ENCODE measurements at regions of chr3 and their contacts with region 1.

Region 1: GRCh38 chr3:105868742-105869530 is at the start of gene CBLB:
- DNase-seq: peak; percentile 95 to 98
- H3K4me3 ChIP-seq: peak within 1 kb of the TSS; percentile 69
- H3K27ac ChIP-seq: peak within 1 kb of the TSS; percentile 64
- H3K4me1 ChIP-seq: peaks cover 36% of the 10 kb centered on the region
- H3K27me3 ChIP-seq: no peaks in the 10 kb centered on the region
- CTCF ChIP-seq: no peak
- total RNA-seq, gene CBLB: 29.8 and 44.0 TPM in 2 replicates

Region 2: GRCh38 chr3:105598047-105598796 is 270.7 kb before region 1 on chr3:
- CTCF ChIA-PET with region 1: no interaction called
- POLR2A ChIA-PET with region 1: no interaction called
- intact Hi-C with region 1: loop called (anchors 1 kb)
- DNase-seq: peak; percentile 55 to 96
- H3K4me3 ChIP-seq: 0 out of 2 replicates have a peak overlapping the region, but pooled peaks have one; percentile 2
- H3K27ac ChIP-seq: peak overlapping the region; percentile 49
- H3K4me1 ChIP-seq: peaks cover 16% of the 10 kb centered on the region
- H3K27me3 ChIP-seq: no peaks in the 10 kb centered on the region
- CTCF ChIP-seq: no peak

Region 3: GRCh38 chr3:105899516-105899915 is 30.6 kb after region 1 on chr3:
- CTCF ChIA-PET with region 1: no interaction called
- POLR2A ChIA-PET with region 1: no interaction called
- intact Hi-C with region 1: no loop called
- DNase-seq: peak in 1 of 2 experiments; percentile 67
- H3K4me3 ChIP-seq: no peak overlapping the region
- H3K27ac ChIP-seq: peak overlapping the region; percentile 1; the same call in 1 of the 2 replicates
- H3K4me1 ChIP-seq: peaks cover 14% of the 10 kb centered on the region; the same call in 1 of the 2 replicates
- H3K27me3 ChIP-seq: no peaks in the 10 kb centered on the region
- CTCF ChIP-seq: no peak

Region 4: DNA sequence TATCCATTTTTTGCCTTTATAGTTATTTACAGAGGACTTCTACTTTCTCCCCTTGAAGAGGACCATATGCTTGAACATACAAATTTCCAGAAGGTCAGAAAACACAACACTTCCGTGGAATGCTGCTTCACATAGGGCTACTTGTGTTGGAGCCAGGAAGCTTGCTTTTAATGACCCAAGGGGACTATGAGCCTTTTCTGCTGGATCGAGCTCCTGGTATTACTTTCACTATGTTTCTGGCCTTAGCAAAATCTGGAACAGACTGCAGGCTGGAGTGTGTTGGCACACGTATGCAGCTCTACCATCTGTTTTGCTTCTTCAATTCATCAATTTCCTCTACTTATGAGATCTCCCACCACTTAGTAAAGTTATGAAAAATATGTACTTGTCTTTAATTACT is 69.2 kb after region 1 on chr3:
- CTCF ChIA-PET with region 1: no interaction called
- POLR2A ChIA-PET with region 1: no interaction called
- intact Hi-C with region 1: no loop called
- DNase-seq: no peak
- H3K4me3 ChIP-seq: no peak overlapping the region
- H3K27ac ChIP-seq: no peak overlapping the region
- H3K4me1 ChIP-seq: no peaks in the 10 kb centered on the region
- H3K27me3 ChIP-seq: no peaks in the 10 kb centered on the region
- CTCF ChIP-seq: no peak

Region 5: DNA sequence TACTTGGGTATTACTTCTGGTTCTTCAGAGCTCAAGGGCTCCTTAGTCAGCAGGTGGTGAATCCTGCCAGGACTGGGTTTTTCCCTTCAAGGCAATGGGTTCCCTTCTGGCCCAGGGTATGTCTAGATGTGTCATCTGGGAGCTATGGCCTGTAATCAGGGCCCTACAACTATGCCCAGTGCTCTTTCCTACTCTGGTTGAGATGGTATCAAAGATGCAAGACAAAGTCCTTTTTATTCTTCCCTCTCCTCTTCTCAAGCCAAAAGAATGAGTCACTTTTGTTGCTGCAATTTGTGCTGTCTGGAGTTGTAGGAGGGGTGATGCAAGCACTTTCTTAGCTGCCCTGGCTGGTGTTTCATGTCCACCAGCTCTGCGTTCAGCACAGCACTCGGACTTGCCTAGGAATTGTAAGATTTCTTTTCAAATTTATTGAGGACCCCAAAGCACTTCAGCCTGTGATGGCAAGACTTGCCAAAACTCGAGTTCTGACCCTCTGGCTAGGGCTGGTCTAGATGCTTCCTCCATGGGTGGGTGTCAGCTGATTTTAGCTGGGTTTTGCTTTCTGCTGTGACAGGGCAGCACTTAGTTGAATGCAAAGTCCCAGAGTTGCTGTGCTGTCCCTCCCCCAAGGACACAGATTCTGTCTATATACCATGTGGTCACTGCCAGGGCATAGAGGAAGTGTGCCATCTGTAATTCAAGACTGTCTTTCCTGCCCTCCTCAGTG is 129.0 kb after region 1 on chr3:
- CTCF ChIA-PET with region 1: no interaction called
- POLR2A ChIA-PET with region 1: no interaction called
- intact Hi-C with region 1: loop called (anchors 2 kb)
- DNase-seq: peak; percentile 61 to 95
- H3K4me3 ChIP-seq: peak overlapping the region; percentile 34; the same call in 1 of the 2 replicates
- H3K27ac ChIP-seq: peak overlapping the region; percentile 79
- H3K4me1 ChIP-seq: peaks cover 23% of the 10 kb centered on the region
- H3K27me3 ChIP-seq: no peaks in the 10 kb centered on the region
- CTCF ChIP-seq: no peak

Region 6: DNA sequence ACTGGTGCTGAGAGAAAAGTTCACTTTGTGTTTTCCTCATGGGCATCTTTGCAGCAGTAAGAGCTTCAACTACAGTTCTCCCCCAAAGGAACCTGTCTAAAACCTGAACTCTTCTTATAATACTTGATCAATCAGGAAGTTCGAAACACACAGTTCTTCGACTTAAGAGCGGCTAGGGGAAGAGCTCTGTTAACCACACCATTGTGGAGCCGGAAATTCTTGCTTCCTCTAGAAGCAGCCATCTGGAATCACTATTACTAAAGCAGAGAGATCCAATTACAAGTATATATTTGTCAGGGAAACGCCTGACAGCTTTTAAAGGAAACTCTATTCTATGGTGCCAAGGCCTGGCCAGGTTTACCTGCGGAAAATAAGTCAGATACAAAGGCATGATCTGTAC is 337.2 kb after region 1 on chr3:
- CTCF ChIA-PET with region 1: no interaction called
- POLR2A ChIA-PET with region 1: no interaction called
- intact Hi-C with region 1: loop called (anchors 5 kb)
- DNase-seq: no peak
- H3K4me3 ChIP-seq: no peak overlapping the region
- H3K27ac ChIP-seq: no peak overlapping the region
- H3K4me1 ChIP-seq: 0 out of 2 replicates have a peak, but pooled peaks cover 4% of the 10 kb centered on the region
- H3K27me3 ChIP-seq: no peaks in the 10 kb centered on the region
- CTCF ChIP-seq: no peak

Region 7: DNA sequence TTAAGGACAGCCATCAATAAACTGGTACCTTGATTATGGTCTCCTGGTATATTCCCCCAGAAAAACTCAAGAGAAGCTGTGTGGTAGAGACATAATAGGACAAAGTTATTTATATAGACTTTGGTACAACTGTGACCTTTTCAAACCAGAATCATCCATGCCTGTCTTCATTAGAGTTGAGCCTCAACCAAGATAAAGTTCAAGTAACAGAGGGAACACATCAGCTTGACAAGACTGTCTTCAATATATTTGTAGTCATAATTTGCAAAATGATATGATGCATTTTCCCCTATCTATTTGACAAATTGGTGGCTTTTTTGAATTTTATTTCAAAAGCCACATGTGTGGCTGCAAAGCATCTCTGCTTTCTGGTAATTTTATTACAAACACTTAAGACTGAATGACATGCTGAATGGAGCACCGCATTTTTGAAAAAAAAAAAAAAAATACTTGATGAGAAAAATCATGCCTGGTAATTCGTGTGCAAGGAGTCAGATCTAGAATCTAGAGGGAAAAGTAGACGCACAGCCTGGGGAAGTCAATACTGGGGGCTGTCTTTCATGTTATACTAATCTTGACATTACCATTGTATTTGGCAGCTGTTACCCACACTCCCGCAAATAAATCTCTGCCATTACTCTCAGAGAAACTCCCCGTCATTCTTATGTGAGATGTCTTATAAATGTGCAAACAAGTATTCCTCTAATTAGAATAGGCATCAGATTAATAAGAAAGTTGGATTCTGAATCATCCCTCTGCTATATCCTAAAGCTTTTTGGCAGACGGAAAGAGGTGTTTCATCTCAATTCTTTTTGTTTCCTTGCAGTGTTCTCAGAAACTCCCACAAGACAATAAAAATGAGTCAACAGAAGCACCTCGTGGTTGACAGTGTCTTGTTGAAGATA is 554.6 kb after region 1 on chr3:
- CTCF ChIA-PET with region 1: no interaction called
- POLR2A ChIA-PET with region 1: no interaction called
- intact Hi-C with region 1: no loop called
- DNase-seq: peak in 1 of 2 experiments; percentile 20
- H3K4me3 ChIP-seq: no peak overlapping the region
- H3K27ac ChIP-seq: no peak overlapping the region
- H3K4me1 ChIP-seq: no peaks in the 10 kb centered on the region; the same call in 1 of the 2 replicates
- H3K27me3 ChIP-seq: no peaks in the 10 kb centered on the region
- CTCF ChIP-seq: no peak

Region 8: GRCh38 chr3:106609666-106610301 is 740.8 kb after region 1 on chr3:
- CTCF ChIA-PET with region 1: no interaction called
- POLR2A ChIA-PET with region 1: no interaction called
- intact Hi-C with region 1: loop called (anchors 5 kb)
- DNase-seq: peak; percentile 64 to 73
- H3K4me3 ChIP-seq: no peak overlapping the region
- H3K27ac ChIP-seq: no peak overlapping the region
- H3K4me1 ChIP-seq: peaks cover 11% of the 10 kb centered on the region
- H3K27me3 ChIP-seq: no peaks in the 10 kb centered on the region
- CTCF ChIP-seq: peak; percentile 98